ENCODE measurements at regions of chr1 and their contacts with region 1.

Region 1: DNA sequence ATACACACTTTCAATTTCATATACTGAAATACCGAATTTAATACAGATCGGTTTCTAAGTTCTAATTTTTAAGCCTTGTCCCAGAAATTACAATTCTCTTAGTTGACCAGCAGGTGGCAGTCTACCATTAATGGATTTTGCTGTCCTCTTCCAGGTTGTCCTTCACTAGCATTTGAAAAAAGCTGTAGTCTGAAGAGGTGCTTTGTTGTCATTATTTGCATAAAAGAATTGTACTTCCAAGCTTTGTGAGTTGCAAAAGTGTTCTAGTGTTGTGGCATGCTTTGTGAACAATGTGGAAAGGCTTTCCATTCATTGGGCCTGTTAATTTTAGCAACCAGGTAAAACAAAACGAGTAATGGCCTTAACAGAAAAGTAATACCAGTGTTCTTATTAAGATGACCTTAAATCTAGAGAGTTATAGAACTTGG is 193.6 kb downstream of the RPS6KC1 start:
- DNase-seq: no peak
- ATAC-seq: no peak
- H3K4me3 ChIP-seq: no peak overlapping the region
- H3K27ac ChIP-seq: no peak overlapping the region
- H3K4me1 ChIP-seq: no peaks in the 10 kb centered on the region
- H3K27me3 ChIP-seq: no peaks in the 10 kb centered on the region

Region 2: GRCh38 chr1:213122514-213122929 is 122.2 kb before region 1 on chr1:
- intact Hi-C with region 1: loop called in 1 of 2 experiments (anchors 5 kb)
- DNase-seq: no peak
- ATAC-seq: no peak
- H3K4me3 ChIP-seq: no peak overlapping the region
- H3K27ac ChIP-seq: no peak overlapping the region
- H3K4me1 ChIP-seq: peaks cover 0 to 3% of the 10 kb centered on the region in 2 donors
- H3K27me3 ChIP-seq: no peaks in the 10 kb centered on the region

Region 3: DNA sequence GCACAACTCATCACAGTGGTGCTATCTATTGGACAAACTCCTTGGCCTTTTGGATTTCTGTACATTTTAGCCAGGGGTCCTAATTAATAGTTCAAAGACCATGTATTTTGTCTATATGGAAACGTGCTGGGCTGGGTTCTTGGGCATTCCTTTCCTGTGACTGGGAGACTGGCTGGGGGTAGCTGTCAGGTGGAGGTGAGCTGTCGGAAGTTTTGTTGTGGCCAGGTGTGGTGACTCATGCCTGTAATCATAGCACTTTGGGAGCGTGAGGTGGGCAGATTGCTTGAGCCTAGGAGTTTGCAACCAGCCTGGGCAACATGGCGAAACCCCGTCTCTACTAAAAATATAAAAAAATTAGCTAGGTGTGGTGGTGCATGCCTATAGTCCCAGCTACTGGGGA is 198.7 kb after region 1 on chr1:
- intact Hi-C with region 1: no loop called
- DNase-seq: no peak
- ATAC-seq: no peak
- H3K4me3 ChIP-seq: no peak overlapping the region
- H3K27ac ChIP-seq: no peak overlapping the region
- H3K4me1 ChIP-seq: no peaks in the 10 kb centered on the region
- H3K27me3 ChIP-seq: peaks cover 0 to 1% of the 10 kb centered on the region in 2 donors

Region 4: GRCh38 chr1:214123061-214123784 is 878.5 kb after region 1 on chr1:
- intact Hi-C with region 1: loop called (anchors 5 kb)
- DNase-seq: peak in 1 of 2 donors; percentile 59
- ATAC-seq: peak; percentile 64
- H3K4me3 ChIP-seq: no peak overlapping the region
- H3K27ac ChIP-seq: no peak overlapping the region
- H3K4me1 ChIP-seq: no peaks in the 10 kb centered on the region
- H3K27me3 ChIP-seq: no peaks in the 10 kb centered on the region